Right cardiac atrium (tissue), 5 donors: ENCODE measurements at regions of chr16 and their contacts with region 1.

Region 1: DNA sequence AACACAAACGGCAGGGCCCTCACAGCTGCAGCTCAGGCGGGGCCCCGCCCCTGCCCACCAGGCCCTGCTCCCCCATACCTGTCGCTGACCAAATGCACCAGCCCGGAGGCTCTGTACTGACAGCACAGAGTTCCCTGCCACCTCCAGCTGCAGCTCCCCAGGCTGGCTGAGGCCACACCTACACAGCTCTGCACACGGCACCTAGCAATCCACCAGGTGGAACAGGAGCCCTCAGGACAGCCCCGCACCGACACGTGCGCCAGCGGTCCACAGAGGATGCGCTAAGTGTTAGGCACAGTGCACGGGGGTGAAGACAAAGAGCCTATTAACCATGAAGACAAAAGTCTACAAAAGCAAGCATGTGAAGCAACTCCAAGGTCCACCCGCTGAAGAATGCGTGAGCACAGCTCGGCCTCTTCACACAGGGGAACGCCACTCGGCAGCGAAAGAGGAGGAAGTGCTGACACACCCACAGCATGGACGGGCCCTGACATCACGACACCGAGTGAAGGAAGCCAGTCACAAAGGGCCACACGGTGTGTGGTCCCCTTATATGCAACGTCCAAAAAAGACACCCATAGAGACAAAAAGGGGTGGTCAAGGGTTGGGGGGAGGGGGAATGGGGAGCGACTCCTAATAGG is 5.3 kb downstream of the ZCCHC14 start:
- DNase-seq: peak in 2 of 3 donors; percentile 69 to 76
- ATAC-seq: peak; percentile 44 to 66
- H3K4me3 ChIP-seq: no peak overlapping the region
- H3K27ac ChIP-seq: peak overlapping the region; percentile 5
- H3K4me1 ChIP-seq: peaks cover 10% of the 10 kb centered on the region
- H3K27me3 ChIP-seq: no peaks in the 10 kb centered on the region

Region 2: DNA sequence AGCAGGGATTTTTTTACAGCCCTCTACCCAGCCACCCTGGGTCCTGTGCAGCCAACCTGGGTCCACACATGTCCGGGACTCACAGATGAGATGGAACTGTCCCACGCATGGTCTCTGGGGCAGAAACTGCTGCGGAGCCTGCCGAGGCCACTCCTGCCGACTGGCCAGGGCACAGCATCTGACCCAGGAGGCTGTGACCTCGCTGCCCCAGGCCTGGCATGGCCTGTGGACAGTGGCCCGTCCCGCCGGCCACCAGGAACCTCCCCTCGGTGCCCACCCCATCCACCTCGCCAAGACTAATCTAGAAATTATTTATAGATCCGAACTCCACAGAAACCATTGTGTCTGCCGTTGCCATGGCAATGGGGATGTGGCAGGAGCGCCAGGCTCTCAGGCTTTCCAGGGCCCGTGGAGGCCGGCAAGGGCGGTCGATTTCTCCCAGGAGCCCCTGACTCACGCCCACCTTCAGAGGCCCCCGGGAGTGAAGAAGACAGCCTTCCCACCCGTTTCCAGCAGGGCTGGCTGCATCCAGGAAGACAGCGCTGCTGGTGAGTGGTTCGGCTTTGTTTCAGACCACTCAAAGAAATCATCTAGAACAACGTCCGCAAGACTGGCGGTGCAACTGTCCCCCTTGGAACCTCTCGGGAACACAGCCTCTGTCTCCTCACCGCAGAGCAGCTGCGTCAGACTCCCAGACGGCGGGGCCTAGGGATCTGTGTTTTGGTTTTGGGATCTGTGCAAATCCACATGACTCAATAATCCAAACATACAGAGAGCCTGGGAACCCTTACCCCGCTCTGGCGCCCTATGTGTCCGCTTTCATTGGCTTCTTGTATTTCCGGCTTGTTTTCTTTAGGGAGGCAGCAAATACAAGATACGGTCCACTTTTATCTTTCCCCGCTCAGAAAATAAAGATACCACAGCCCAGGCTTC is 53.7 kb after region 1 on chr16:
- intact Hi-C with region 1: loop called in 1 of 4 experiments (anchors 10 kb)
- DNase-seq: peak; percentile 74 to 82 (median 81)
- ATAC-seq: peak; percentile 79 to 87
- H3K4me3 ChIP-seq: peak overlapping the region; percentile 12
- H3K27ac ChIP-seq: peak overlapping the region; percentile 26
- H3K4me1 ChIP-seq: no peaks in the 10 kb centered on the region
- H3K27me3 ChIP-seq: no peaks in the 10 kb centered on the region